ENCODE measurements at regions of chr3 and their contacts with region 1.

Region 1: DNA sequence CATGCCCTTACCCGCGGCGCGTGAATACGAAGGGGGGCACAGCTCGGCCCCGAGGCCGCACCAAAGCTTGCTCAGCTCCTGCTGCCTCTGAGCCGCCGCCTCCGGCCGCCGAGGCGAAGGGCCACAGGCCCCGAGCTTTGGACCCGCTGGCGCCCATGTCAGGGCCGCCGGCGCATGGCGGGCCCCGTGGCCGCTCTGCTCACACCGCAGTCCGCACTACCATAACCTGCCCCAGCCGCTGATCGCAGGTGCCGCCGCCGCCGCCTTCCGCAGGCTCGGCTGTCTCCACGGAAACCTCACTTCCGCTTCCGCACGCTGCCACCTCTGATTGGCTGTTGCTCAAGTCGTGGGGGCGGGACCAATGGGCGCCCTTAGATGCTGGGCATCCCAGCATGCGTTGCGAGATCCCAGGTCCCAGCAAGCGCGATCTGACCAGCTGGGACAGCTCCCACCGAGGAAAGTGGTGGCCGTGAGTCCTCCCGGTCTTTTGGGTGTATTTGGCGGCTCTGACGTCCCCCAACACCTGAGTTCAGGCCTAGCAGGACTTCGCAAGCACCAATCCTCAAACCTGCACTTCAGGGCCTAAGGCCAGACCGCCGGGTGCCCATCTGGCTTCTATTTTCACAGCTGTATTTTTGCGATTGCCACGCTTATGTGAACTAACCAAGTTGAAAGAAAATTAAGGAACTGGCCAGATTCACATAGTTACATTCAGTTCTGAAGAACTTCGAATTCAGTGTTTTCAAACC is at the start of gene TUSC2:
- DNase-seq: peak; percentile 98
- ATAC-seq: peak; percentile 92 to 94 (median 93)
- H3K4me3 ChIP-seq: peak within 1 kb of the TSS; percentile 100
- H3K27ac ChIP-seq: peak within 1 kb of the TSS; percentile 95
- H3K4me1 ChIP-seq: peaks cover 31% of the 10 kb centered on the region
- H3K27me3 ChIP-seq: no peaks in the 10 kb centered on the region
- CTCF ChIP-seq: no peak
- total RNA-seq, gene TUSC2: 31.5 to 43.6 (median 33.7) TPM

Region 2: GRCh38 chr3:50260027-50260941 is 67.8 kb before region 1 on chr3:
- intact Hi-C with region 1: loop called in 1 of 2 experiments (anchors 5 kb)
- DNase-seq: peak; percentile 95 to 96
- ATAC-seq: peak; percentile 93 to 97 (median 94)
- H3K4me3 ChIP-seq: peak overlapping the region; percentile 80
- H3K27ac ChIP-seq: peak overlapping the region; percentile 98
- H3K4me1 ChIP-seq: peaks cover 22% of the 10 kb centered on the region
- H3K27me3 ChIP-seq: no peaks in the 10 kb centered on the region
- CTCF ChIP-seq: peak; percentile 98

Region 3: GRCh38 chr3:50418850-50419249 is 90.7 kb after region 1 on chr3:
- intact Hi-C with region 1: no loop called
- DNase-seq: no peak
- ATAC-seq: no peak
- H3K4me3 ChIP-seq: no peak overlapping the region
- H3K27ac ChIP-seq: no peak overlapping the region
- H3K4me1 ChIP-seq: no peaks in the 10 kb centered on the region
- H3K27me3 ChIP-seq: no peaks in the 10 kb centered on the region
- CTCF ChIP-seq: no peak

Measured in psoas muscle (tissue), 8 donors.